Natural killer cell (primary cell): ENCODE measurements at regions of chr16 and their contacts with region 1.

Region 1: GRCh38 chr16:57485916-57486857 is at the start of gene DOK4:
- DNase-seq: peak; percentile 68 to 85
- ATAC-seq: peak; percentile 88 to 95 (median 94)
- H3K4me3 ChIP-seq: peak within 1 kb of the TSS; percentile 70
- H3K4me3 Mint-ChIP-seq: peak within 1 kb of the TSS; percentile 91
- H3K27ac ChIP-seq: no peak within 1 kb of the TSS
- H3K27ac Mint-ChIP-seq: peak within 1 kb of the TSS in 1 of 2 donors; percentile 85
- H3K4me1 ChIP-seq: peaks cover 20% of the 10 kb centered on the region
- H3K4me1 Mint-ChIP-seq: peaks cover 11 to 26% of the 10 kb centered on the region in 2 donors
- H3K27me3 ChIP-seq: no peaks in the 10 kb centered on the region
- H3K27me3 Mint-ChIP-seq: peaks cover 0 to 3% of the 10 kb centered on the region in 2 donors
- CTCF ChIP-seq: no peak
- total RNA-seq, gene DOK4: 0.75 to 2.5 (median 1.5) TPM

Region 2: DNA sequence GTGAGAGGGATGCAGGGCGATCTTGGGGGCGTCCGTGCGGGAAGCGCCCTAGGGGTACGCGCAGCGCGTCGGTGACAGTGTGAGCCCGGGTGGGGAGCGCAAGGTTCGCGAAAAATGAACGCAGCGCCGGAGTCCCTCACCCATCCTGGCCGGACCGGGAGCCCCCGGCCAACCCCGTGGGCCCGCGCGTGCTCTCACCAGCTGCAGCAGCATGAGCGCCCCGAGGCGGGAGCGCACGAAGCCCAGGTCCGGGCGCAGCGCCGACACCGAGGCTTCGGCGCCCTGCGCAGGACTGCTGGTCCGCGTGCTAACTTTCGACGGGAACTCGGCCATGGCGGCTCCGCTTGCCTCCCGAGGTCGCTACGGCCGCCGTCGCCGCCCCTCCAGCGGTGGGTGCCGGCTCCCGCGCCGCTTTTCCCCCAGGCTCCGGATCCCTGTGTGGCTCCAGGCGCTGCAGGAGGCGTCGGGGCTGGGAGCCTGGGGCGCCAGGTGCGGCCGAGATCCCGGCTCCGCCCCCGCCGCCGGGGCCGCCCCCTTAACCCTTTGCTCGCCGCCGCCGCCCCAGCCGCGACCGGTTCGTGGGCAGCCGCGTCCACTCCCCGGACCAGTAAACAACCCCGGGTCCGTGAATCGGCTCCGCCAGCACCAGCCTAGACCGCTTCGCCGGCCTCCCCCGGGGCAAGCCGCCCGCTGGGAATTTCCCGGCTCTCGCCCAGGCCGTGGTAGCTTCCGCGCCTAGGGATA is 201.8 kb before region 1 on chr16 and contains the start of gene PLLP:
- intact Hi-C with region 1: no loop called
- DNase-seq: peak; percentile 24 to 66
- ATAC-seq: peak; percentile 63 to 80 (median 73)
- H3K4me3 ChIP-seq: peak within 1 kb of the TSS; percentile 27
- H3K4me3 Mint-ChIP-seq: peak within 1 kb of the TSS; percentile 82
- H3K27ac ChIP-seq: no peak within 1 kb of the TSS
- H3K27ac Mint-ChIP-seq: no peak within 1 kb of the TSS
- H3K4me1 ChIP-seq: peaks cover 13% of the 10 kb centered on the region
- H3K4me1 Mint-ChIP-seq: peaks cover 9 to 15% of the 10 kb centered on the region in 2 donors
- H3K27me3 ChIP-seq: peaks cover 18% of the 10 kb centered on the region
- H3K27me3 Mint-ChIP-seq: peaks cover 31 to 32% of the 10 kb centered on the region in 2 donors
- CTCF ChIP-seq: no peak
- total RNA-seq, gene PLLP: not detected

Region 3: DNA sequence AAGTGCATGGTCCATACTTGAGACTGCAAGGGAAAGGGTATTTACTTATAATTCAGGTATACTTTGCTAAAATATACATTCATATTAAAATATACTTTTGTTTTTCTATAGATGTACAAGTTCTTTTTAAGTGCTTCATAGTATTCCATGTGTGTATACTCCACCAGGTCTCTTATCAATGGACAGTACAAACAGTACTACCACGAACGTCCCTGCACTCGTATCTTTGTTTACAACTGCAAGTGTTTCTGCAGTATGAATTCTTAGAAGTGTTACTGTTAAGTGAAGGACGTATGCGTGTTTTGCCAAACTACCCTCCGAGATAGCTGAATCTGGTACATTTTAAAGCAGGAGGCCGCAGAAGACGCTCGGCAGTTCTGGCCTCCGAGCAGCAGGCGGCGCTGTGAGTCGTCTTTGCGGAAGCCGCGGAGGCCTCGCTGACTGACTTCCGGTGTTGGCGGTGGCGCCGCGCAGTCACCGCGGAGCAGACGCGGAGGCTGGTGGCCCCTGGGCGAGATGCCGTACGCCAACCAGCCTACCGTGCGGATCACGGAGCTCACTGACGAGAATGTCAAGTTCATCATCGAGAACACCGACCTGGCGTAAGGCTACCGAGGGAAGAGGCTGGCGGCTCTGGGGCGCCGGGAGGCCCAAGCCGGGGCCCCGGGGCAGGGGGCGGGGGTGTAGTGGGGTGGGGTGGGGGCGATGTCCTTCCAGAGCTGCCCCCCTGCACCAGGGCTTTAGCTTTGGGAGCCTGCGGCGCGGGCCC is 23.8 kb before region 1 on chr16 and contains the start of gene POLR2C:
- intact Hi-C with region 1: no loop called
- DNase-seq: peak; percentile 94 to 96
- ATAC-seq: peak; percentile 97 to 98 (median 98)
- H3K4me3 ChIP-seq: peak within 1 kb of the TSS; percentile 51
- H3K4me3 Mint-ChIP-seq: peak within 1 kb of the TSS; percentile 100
- H3K27ac ChIP-seq: peak within 1 kb of the TSS; percentile 58
- H3K27ac Mint-ChIP-seq: peak within 1 kb of the TSS; percentile 90 to 94
- H3K4me1 ChIP-seq: peaks cover 12% of the 10 kb centered on the region
- H3K4me1 Mint-ChIP-seq: peaks cover 32 to 33% of the 10 kb centered on the region in 2 donors
- H3K27me3 ChIP-seq: no peaks in the 10 kb centered on the region
- H3K27me3 Mint-ChIP-seq: no peaks in the 10 kb centered on the region
- CTCF ChIP-seq: peak; percentile 94
- total RNA-seq, gene POLR2C: 55.4 to 71.2 (median 66.7) TPM

Region 4: DNA sequence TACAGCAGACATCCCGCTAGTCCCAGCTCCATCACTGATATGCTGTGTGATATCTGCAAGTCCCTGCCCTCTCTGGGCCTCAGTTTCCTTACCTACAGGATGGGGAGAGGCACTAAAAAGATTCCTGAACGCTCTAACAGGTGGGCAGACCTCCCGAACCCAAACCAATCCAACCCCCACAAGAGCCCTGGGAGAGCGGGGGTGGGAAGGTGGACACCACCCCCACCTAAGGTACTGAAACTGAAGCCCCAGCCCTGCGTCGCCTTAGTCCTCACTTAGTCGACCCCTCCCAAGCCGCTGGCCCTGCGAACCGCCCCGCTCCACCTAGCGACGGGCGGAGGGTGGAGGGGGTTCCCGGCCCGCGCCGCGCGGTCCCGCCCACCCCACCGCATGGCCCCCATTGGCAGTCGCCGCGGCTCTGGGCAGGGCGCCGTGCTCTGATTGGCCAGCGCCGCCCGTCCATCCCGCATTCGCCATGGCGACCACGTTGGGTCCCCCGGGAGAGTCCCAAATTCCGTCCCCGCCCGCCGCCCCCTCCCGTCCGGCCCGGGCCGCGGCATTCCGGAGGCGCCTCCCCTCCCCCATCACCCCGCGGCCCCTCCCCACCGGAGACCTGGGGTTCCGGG is 49.6 kb after region 1 on chr16:
- intact Hi-C with region 1: loop called (anchors 2 kb)
- DNase-seq: peak; percentile 92 to 97
- ATAC-seq: peak; percentile 84 to 93 (median 89)
- H3K4me3 ChIP-seq: peak overlapping the region; percentile 45
- H3K4me3 Mint-ChIP-seq: peak overlapping the region; percentile 86
- H3K27ac ChIP-seq: peak overlapping the region; percentile 95
- H3K27ac Mint-ChIP-seq: peak overlapping the region; percentile 99
- H3K4me1 ChIP-seq: peaks cover 87% of the 10 kb centered on the region
- H3K4me1 Mint-ChIP-seq: peaks cover 68 to 82% of the 10 kb centered on the region in 2 donors
- H3K27me3 ChIP-seq: no peaks in the 10 kb centered on the region
- H3K27me3 Mint-ChIP-seq: no peaks in the 10 kb centered on the region
- CTCF ChIP-seq: no peak

Region 5: DNA sequence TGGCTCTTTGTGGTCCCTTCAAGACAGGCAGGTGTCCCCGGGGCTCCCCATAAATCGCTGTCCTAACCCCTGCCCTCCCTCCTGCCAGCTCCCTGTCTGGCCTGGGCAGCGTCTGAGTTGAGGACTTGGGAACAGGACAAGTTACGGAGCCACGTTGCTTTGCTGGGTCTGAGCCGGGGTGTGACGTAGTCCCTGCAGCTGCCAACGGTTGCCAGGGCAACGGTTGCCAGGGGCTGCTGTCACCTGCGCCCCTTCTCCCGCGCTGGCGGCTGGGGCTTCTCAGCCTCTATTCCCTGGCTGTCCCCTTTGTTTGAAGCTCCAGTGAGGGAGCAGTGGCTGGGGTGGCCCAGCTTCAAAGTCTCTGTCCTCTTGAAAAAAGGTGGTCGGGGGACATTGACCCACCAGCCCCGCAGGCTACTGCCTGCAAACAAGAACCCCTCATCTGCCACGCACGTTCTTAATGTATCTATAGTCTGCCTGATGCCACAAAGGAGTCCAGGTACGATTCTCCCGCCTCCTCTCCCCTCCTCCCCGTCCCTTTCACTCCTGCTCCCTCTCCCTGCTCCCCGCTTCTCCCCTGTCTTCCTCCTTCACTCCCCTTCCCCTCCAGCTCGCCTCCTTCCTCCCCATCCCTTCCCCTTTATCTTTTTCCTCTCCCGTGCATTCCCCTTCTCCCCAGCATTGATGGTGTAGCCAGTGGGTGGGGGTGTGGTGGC is 153.1 kb after region 1 on chr16:
- intact Hi-C with region 1: no loop called
- DNase-seq: peak in 1 of 2 donors; percentile 67
- ATAC-seq: no peak
- H3K4me3 ChIP-seq: no peak overlapping the region
- H3K4me3 Mint-ChIP-seq: no peak overlapping the region
- H3K27ac ChIP-seq: no peak overlapping the region
- H3K27ac Mint-ChIP-seq: peak overlapping the region in 1 of 2 donors; percentile 20
- H3K4me1 ChIP-seq: peaks cover 18% of the 10 kb centered on the region
- H3K4me1 Mint-ChIP-seq: peaks cover 0 to 31% of the 10 kb centered on the region in 2 donors
- H3K27me3 ChIP-seq: no peaks in the 10 kb centered on the region
- H3K27me3 Mint-ChIP-seq: no peaks in the 10 kb centered on the region
- CTCF ChIP-seq: no peak